Activated CD4-positive, alpha-beta memory T cell treated with anti-CD3 and anti-CD28 coated beads, Interleukin-2, amount 10 ng/mL, durations not matched to agents 7 days and 5 days (primary cell): ENCODE measurements at regions of chr10 and their contacts with region 1.

Region 1: DNA sequence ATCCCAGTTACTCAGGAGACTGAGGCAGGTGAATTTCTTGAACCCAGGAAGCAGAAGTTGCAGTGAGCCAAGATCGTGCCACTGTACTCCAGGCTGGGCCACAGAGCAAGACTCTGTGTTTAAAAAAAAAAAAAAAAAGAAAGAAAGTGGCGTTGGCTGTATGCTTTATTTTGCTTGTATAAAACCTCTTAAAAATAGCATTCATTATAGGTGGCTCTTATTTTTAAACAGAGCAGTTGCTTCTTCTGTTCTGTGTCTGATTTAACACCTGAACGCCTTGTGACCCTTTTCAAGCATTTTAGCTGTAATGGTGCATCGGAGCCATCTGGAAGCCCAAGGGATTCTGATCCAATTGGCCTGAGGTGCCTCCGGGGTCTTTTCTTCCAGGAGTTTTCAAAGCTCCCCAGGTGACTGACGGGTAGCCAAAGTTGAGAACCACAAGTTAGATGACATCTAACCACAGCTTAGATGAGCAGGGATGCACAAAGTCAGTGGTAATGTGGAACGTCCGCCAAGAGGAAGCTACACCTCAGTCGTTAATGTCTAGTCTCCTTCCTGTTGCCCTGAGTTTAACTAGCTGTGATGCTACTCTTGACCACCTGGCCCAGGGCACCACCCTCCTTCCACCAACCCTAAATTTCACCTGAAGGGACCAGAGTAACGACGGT is 274.6 kb upstream of the KLF6 start:
- DNase-seq: peak; percentile 49
- H3K4me3 Mint-ChIP-seq: no peak overlapping the region
- H3K27ac Mint-ChIP-seq: peak overlapping the region; percentile 70
- H3K4me1 Mint-ChIP-seq: peaks cover 29% of the 10 kb centered on the region
- H3K27me3 Mint-ChIP-seq: no peaks in the 10 kb centered on the region

Region 2: DNA sequence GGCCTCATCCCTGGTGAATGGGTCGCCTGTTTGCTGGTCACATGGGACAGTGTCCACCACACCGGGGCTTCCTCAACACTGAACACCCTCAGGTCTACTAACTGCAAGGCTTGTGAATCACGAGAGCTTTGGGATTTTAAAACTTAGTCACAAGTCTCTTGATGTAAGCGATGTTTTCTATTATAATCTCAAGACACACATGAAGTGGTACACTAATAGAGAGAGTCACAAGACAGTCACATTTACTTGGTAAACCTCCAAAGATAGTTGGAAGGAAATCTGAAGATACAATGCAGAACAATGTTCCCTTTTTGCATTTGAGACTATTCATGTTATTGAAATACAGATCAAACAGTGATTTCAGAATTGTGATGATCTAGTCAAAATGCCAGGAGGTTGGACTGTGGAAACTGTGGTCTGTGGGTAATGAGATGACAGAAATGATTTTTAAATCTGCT is 41.5 kb before region 1 on chr10:
- CTCF ChIA-PET with region 1: no interaction called
- POLR2A ChIA-PET with region 1: no interaction called
- DNase-seq: no peak
- H3K4me3 Mint-ChIP-seq: no peak overlapping the region
- H3K27ac Mint-ChIP-seq: no peak overlapping the region
- H3K4me1 Mint-ChIP-seq: peaks cover 15% of the 10 kb centered on the region
- H3K27me3 Mint-ChIP-seq: no peaks in the 10 kb centered on the region

Region 3: GRCh38 chr10:4073912-4074311 is 14.3 kb after region 1 on chr10:
- CTCF ChIA-PET with region 1: interaction called, 3 read pairs
- POLR2A ChIA-PET with region 1: interaction called, 11 read pairs
- DNase-seq: no peak
- H3K4me3 Mint-ChIP-seq: no peak overlapping the region
- H3K27ac Mint-ChIP-seq: no peak overlapping the region
- H3K4me1 Mint-ChIP-seq: peaks cover 33% of the 10 kb centered on the region
- H3K27me3 Mint-ChIP-seq: no peaks in the 10 kb centered on the region

Region 4: GRCh38 chr10:4174197-4174596 is 114.6 kb after region 1 on chr10:
- CTCF ChIA-PET with region 1: no interaction called
- POLR2A ChIA-PET with region 1: no interaction called
- DNase-seq: no peak
- H3K4me3 Mint-ChIP-seq: no peak overlapping the region
- H3K27ac Mint-ChIP-seq: no peak overlapping the region
- H3K4me1 Mint-ChIP-seq: no peaks in the 10 kb centered on the region
- H3K27me3 Mint-ChIP-seq: no peaks in the 10 kb centered on the region